Activated T-helper 2 cell treated with anti-CD3 and anti-CD28 coated beads, Interferon-gamma antibody, Interleukin-2, Interleukin-4, amounts not matched to agents 10 μg/mL and 5 μg/mL and 100 μg/mL, durations not matched to agents 14 hours and 24 hours and 36 hours (primary cell): ENCODE measurements at regions of chr4 and their contacts with region 1.

Region 1: DNA sequence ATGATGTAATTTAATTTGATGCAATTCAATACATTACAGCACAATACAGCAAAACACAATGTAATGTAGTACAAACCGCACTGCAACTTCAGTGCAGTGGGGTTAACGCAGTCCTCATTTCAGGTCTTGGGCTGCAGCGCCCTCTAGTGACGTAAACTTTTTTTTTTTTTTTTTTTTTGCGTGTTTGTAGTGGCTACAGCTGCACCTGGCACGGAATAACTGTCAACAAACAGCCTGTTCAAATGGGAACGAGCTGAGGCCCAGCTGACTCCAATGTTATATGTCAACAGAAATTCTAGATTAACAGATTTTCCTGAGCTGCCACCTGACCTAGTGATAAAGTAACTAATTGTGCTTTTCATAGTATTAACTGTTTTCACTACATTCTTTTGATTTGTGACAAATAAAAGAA is 33.5 kb upstream of the RASSF6 start:
- DNase-seq: no peak
- H3K4me3 Mint-ChIP-seq: no peak overlapping the region
- H3K27ac Mint-ChIP-seq: no peak overlapping the region
- H3K4me1 Mint-ChIP-seq: no peaks in the 10 kb centered on the region
- H3K27me3 Mint-ChIP-seq: peaks cover 8% of the 10 kb centered on the region

Region 2: GRCh38 chr4:73311428-73311827 is 342.3 kb before region 1 on chr4:
- intact Hi-C with region 1: loop called (anchors 2 kb)
- DNase-seq: no peak
- H3K4me3 Mint-ChIP-seq: no peak overlapping the region
- H3K27ac Mint-ChIP-seq: no peak overlapping the region
- H3K4me1 Mint-ChIP-seq: no peaks in the 10 kb centered on the region
- H3K27me3 Mint-ChIP-seq: no peaks in the 10 kb centered on the region

Region 3: GRCh38 chr4:73603271-73603710 is 50.4 kb before region 1 on chr4:
- intact Hi-C with region 1: loop called (anchors 5 kb)
- DNase-seq: no peak
- H3K4me3 Mint-ChIP-seq: no peak overlapping the region
- H3K27ac Mint-ChIP-seq: no peak overlapping the region
- H3K4me1 Mint-ChIP-seq: peaks cover 5% of the 10 kb centered on the region
- H3K27me3 Mint-ChIP-seq: peaks cover 3% of the 10 kb centered on the region